ENCODE measurements at regions of chr12 and their contacts with region 1.

Region 1: GRCh38 chr12:9948606-9949296 is 16.6 kb upstream of the CLEC2A start:
- DNase-seq: no peak
- H3K4me3 ChIP-seq: no peak overlapping the region
- H3K27ac ChIP-seq: no peak overlapping the region
- H3K4me1 ChIP-seq: no peaks in the 10 kb centered on the region
- H3K27me3 ChIP-seq: no peaks in the 10 kb centered on the region
- CTCF ChIP-seq: no peak
- POLR2A ChIP-seq: no peak

Region 2: DNA sequence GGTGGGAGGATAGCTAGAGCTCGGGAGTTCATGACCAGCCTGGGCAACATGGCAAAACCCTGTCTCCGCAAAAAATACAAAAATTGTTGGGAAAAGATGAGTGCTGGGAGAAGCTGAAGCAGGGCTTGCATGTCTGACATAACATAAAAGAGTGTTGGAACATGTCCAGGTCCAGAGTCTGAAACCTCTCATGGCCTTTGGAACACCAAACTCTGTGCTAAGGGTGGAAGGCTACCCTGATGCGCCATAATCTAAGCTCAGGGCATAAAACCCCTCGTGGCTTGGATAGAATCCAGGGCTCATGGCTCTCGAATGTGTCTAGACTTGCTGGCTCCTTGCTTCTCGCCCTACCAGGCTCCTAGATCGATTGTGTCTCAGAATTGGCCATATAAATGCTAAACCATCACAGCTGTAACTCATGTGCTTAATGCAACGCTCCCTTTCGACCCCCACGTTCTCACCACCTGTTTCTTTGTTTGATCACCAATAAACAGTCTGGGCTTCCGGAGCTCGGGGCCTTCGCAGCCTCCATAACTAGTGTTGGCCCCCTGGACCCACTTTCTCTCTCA is 188.0 kb after region 1 on chr12:
- intact Hi-C with region 1: loop called (anchors 5 kb)
- DNase-seq: no peak
- H3K4me3 ChIP-seq: no peak overlapping the region
- H3K27ac ChIP-seq: no peak overlapping the region
- H3K4me1 ChIP-seq: no peaks in the 10 kb centered on the region
- H3K27me3 ChIP-seq: no peaks in the 10 kb centered on the region
- CTCF ChIP-seq: no peak
- POLR2A ChIP-seq: no peak